Colonic mucosa (tissue), 4 donors: ENCODE measurements at regions of chr1 and their contacts with region 1.

Region 1: DNA sequence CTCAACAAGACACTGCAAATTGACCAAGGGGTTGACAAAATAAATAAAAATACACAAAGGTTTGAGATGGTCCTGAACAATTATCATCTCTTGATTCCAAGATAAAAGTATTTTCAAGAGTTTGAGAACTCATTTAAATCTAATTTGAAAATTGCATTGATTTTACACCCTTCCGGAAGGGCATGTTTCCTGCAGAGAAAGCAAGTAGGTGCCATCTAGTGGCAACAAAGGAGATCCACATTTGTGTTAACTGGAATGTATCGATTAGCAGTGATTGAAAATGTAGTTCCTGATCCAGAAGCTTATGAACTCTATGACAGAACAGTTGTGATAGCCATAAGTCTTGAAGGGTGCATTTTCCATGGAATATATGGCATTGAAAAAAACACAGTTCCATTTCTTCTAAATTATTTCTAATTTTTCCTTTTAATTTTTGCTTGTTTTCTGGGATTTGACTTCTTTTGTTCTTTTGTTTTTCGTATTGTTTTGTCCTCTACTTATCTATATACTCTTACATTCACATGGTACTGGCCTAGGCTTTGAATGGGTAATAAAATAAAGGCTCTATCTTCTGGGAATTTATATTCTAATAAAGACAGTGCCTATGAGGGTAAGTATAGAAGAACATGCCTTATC is 143.7 kb downstream of the DNM3 start:
- DNase-seq: no peak
- H3K4me3 ChIP-seq: no peak overlapping the region
- H3K27ac ChIP-seq: no peak overlapping the region
- H3K4me1 ChIP-seq: no peaks in the 10 kb centered on the region
- H3K27me3 ChIP-seq: no peaks in the 10 kb centered on the region
- CTCF ChIP-seq: peak; percentile 79

Region 2: GRCh38 chr1:171801487-171801891 is 183.5 kb before region 1 on chr1:
- intact Hi-C with region 1: loop called (anchors 1 kb)
- DNase-seq: peak; percentile 27
- H3K4me3 ChIP-seq: no peak overlapping the region
- H3K27ac ChIP-seq: no peak overlapping the region
- H3K4me1 ChIP-seq: no peaks in the 10 kb centered on the region
- H3K27me3 ChIP-seq: no peaks in the 10 kb centered on the region
- CTCF ChIP-seq: peak; percentile 78